Lower leg skin (tissue), 4 donors: ENCODE measurements at regions of chr2 and their contacts with region 1.

Region 1: GRCh38 chr2:207724113-207724512 is 12.7 kb downstream of the CCNYL1 start:
- DNase-seq: no peak
- H3K4me3 ChIP-seq: no peak overlapping the region
- CTCF ChIP-seq: no peak
- POLR2A ChIP-seq: no peak

Region 2: DNA sequence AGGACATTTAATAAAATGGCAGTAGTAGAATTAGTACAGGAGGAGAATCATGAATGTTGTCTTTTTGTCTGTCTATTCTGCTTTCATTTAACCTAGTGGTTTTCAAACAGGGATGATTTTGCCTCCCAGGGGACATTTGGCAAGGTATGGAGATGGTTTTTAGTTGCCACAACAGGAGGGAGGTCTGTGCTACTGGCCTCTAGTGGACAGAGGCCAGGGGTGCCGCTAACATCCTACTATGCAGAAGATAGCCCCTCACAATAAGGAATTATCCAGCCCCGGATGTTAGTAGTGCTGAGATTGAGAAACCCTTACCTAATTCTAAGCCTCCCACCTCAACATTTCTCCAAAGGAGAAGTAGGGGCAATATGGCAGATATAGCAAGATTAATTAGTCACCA is 940.4 kb before region 1 on chr2:
- intact Hi-C with region 1: loop called (anchors 5 kb)
- DNase-seq: no peak
- H3K4me3 ChIP-seq: no peak overlapping the region
- CTCF ChIP-seq: no peak
- POLR2A ChIP-seq: no peak

Region 3: DNA sequence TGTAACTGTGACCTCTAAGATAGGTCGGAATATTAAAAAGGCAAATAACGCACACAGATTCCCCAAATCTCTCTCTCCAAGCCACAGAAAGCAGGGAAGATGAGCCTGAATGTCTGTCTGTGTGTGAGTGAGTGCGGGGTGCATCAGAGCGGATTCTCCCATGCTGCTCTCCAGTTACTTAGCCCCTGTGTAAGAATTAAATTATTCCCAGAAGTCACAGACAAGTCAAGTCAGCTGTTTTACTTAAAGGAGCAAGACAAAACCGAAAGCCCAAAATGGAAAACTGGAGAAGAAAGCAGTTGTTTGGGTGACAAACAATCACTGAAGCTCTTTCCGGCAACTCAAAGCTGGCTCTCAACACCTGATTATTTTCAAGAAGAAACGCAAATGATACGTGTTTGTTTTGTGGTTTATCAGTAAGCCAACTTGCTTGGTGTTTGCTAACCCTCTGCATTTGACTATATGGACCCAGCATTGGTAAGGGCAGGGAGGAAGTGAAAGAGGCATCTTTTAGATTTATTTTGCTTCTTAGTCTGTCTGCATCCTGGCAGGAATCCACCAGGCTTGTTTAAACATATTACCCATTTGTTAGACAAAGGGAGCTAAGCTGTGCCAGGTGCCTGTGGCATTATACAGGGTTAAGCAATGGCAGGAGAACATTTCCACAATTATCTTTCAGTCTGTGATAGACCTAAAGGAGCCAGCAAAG is 315.9 kb before region 1 on chr2:
- intact Hi-C with region 1: no loop called
- DNase-seq: peak in 1 of 2 donors; percentile 55
- H3K4me3 ChIP-seq: no peak overlapping the region
- CTCF ChIP-seq: no peak
- POLR2A ChIP-seq: no peak

Region 4: DNA sequence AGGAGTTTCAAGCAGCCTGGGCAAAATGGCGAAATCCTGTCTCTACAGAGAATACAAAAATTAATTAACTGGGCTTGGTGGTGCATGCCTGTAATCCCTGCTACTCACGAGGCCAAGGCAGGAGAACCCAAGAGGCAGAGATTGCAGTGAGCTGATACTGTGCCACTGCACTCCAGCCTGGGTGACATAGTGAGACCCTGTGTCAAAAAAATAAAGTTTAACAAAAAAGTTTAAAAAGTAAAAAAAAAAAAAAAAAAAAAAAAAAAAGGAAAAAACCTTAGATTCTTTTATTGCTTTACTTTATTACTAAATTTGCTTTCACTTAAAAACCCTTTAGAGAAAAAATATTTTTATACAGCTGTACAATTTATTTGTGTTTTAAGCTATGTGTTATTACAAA is 183.7 kb before region 1 on chr2:
- intact Hi-C with region 1: no loop called
- DNase-seq: no peak
- H3K4me3 ChIP-seq: no peak overlapping the region
- CTCF ChIP-seq: no peak
- POLR2A ChIP-seq: no peak

Region 5: DNA sequence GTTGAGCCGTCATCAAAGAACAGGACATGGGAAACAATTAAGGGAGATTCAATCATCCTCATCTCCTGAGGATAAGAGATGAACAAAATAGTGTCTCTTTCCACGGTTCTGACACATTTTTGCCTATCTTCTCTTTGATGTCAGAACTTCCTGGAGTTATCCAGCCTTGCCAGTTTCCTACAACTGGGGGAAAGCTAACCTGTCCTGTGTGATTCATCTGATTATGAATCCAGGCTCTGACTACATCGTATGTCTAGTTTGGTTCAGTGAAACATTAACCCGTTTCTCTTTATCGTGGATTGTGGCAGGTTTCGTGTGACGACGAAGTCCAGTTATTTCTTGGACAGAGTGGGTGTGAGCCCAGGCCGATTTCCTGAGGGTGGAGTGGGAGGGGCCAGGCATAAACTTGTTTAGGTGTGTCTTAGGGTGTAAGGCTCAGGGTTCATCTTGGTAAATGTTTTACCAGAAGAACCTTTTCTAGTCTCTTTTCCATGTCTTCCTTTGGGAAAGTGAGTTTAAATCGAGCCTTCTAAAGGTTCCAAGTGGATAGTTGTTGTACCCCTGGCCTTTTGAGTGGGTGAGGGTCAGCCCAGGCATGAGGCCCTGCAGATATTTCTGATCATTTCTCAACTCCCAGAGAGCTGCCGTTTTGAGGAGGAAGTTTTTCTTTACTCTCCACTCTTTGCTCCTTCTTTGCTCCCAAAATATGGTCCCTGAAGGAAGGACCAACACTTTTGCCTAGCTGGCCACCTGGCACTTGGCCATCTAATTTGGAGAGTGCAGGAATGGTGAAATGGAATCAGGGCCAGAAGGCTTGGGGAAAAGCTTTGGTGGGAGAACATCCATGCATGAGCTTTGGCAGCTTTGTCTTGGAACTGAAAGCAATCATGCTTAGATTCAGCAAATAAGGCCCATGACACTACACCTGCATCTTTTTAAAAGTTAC is 96.0 kb after region 1 on chr2:
- intact Hi-C with region 1: no loop called
- DNase-seq: no peak
- H3K4me3 ChIP-seq: no peak overlapping the region
- CTCF ChIP-seq: no peak
- POLR2A ChIP-seq: no peak